ENCODE measurements at regions of chr6 and their contacts with region 1.

Region 1: GRCh38 chr6:149429427-149430360 is 29.6 kb downstream of the SUMO4 start:
- DNase-seq: no peak
- ATAC-seq: no peak
- H3K4me3 ChIP-seq: no peak overlapping the region
- H3K27ac ChIP-seq: no peak overlapping the region
- H3K4me1 ChIP-seq: peaks cover 2% of the 10 kb centered on the region
- H3K27me3 ChIP-seq: no peaks in the 10 kb centered on the region
- CTCF ChIP-seq: no peak
- POLR2A ChIP-seq: no peak

Region 2: DNA sequence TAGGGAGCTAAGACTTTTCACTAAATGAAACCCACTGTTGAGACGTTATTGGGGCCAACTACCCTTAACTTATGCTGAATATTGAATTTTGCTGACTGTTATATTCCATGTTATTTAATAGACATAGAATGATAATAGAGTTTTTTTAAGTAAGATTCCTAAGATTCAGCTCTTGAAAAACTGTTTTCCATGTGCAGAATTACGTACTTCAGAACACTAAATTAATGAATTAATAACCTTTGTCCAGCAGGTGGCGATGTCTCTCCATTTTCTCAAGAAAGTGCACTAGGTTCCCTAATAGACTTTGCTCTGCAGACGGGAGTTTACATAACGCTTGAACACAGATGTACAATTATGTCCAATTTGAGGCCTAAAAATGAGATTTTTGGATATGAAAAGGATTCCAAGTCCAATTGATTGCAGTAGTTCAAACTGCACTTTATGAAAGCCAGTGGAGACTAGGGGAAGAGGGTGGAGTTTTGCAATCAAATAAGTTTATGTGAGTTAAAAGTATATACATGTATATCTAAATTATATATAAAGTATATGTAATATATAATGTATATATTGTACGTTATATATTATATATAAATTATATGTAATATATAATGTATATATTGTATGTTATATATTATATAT is 400.8 kb before region 1 on chr6:
- intact Hi-C with region 1: loop called (anchors 5 kb)
- DNase-seq: peak; percentile 71 to 85 (median 78)
- ATAC-seq: peak; percentile 78
- H3K4me3 ChIP-seq: no peak overlapping the region
- H3K27ac ChIP-seq: no peak overlapping the region
- H3K4me1 ChIP-seq: peaks cover 33% of the 10 kb centered on the region
- H3K27me3 ChIP-seq: no peaks in the 10 kb centered on the region
- CTCF ChIP-seq: peak; percentile 29 to 91 (median 75)
- POLR2A ChIP-seq: no peak

Region 3: GRCh38 chr6:149082286-149082707 is 347.4 kb before region 1 on chr6:
- intact Hi-C with region 1: loop called (anchors 5 kb)
- DNase-seq: peak; percentile 81 to 92 (median 88)
- ATAC-seq: peak; percentile 72
- H3K4me3 ChIP-seq: no peak overlapping the region
- H3K27ac ChIP-seq: no peak overlapping the region
- H3K4me1 ChIP-seq: peaks cover 55% of the 10 kb centered on the region
- H3K27me3 ChIP-seq: no peaks in the 10 kb centered on the region
- CTCF ChIP-seq: peak; percentile 46 to 87 (median 84)
- POLR2A ChIP-seq: no peak

Measured in body of pancreas (tissue), 4 donors.